ENCODE measurements at regions of chr7 and their contacts with region 1.

Region 1: GRCh38 chr7:151631968-151632749 is 112.5 kb upstream of the RHEB start:
- DNase-seq: peak; percentile 41 to 88
- H3K4me3 ChIP-seq: peak overlapping the region; percentile 44 to 84 (median 78)
- H3K27ac ChIP-seq: no peak overlapping the region
- H3K4me1 ChIP-seq: peaks cover 2 to 17% (median 11%) of the 10 kb centered on the region in 4 experiments
- H3K27me3 ChIP-seq: peaks cover 0 to 25% (median 13%) of the 10 kb centered on the region in 4 experiments; a peak in 5 of 7 replicates
- CTCF ChIP-seq: peak in 2 of 3 experiments; percentile 30 to 36; a peak in 2 of 4 replicates
- EP300 ChIP-seq: peak in 1 of 2 experiments; percentile 47; a peak in 1 of 3 replicates
- POLR2A ChIP-seq: 0 out of 3 replicates have a peak, but pooled peaks of 1 of the 2 experiments have one; percentile 24
- RAD21 ChIP-seq: peak in 1 of 2 experiments; percentile 38; a peak in 1 of 4 replicates

Region 2: GRCh38 chr7:151642746-151643145 is 10.6 kb after region 1 on chr7:
- CTCF ChIA-PET with region 1: interaction called, 28 read pairs
- POLR2A ChIA-PET with region 1: no interaction called
- DNase-seq: no peak
- H3K4me3 ChIP-seq: no peak overlapping the region
- H3K27ac ChIP-seq: no peak overlapping the region
- H3K4me1 ChIP-seq: no peaks in the 10 kb centered on the region
- H3K27me3 ChIP-seq: no peaks in the 10 kb centered on the region
- CTCF ChIP-seq: no peak
- EP300 ChIP-seq: no peak
- POLR2A ChIP-seq: no peak
- RAD21 ChIP-seq: no peak

Region 3: DNA sequence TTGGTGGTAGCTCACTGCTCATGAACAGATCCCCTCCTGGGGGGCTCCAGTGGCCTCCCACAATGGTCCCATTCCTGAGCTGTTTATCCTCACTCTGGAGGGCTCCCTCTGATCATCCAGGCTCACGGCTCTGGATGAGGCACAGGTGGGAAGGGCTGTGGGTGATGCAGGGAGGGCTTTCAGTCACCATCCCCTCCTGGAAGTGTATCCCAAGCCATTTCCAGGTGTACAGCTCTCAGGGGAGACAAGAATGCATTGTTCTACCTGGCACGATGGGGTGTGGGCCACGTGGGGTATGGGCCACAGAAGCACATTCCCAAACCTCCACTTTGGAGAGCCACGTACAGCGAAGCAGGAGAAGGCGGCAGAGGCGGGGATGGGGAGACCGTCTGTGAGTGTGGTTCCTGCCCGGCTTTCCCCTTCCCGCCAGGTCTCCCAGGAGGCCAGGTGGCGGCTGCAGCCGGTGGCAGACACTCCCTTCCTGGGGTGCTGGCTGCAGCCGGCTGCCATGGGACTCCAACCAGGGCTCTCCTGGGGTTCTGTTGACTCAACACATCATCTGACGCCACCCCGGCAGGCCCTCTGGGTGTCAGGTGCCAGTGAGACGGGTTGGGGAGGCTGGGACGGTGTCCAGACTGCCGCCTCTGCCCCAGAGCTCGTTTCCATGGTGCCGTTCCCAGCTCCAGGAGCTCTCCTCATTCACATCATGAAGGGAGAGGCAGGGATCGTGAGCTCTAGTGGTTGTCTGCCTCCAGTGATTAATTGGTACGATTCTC is 57.2 kb after region 1 on chr7:
- CTCF ChIA-PET with region 1: interaction called, 10 read pairs
- POLR2A ChIA-PET with region 1: interaction called, 4 read pairs
- DNase-seq: no peak
- H3K4me3 ChIP-seq: no peak overlapping the region
- H3K27ac ChIP-seq: no peak overlapping the region; the same call in 1 of the 2 replicates
- H3K4me1 ChIP-seq: peaks cover 0 to 16% (median 4%) of the 10 kb centered on the region in 4 experiments; a peak in 2 of 7 replicates
- H3K27me3 ChIP-seq: peaks cover 0 to 3% (median 0%) of the 10 kb centered on the region in 4 experiments; a peak in 1 of 7 replicates
- CTCF ChIP-seq: no peak
- EP300 ChIP-seq: no peak
- POLR2A ChIP-seq: no peak
- RAD21 ChIP-seq: no peak